ENCODE measurements at regions of chr5 and their contacts with region 1.

Region 1: GRCh38 chr5:171484460-171484899 is 65.0 kb downstream of the FGF18 start:
- H3K4me3 ChIP-seq: no peak overlapping the region
- H3K27ac ChIP-seq: no peak overlapping the region
- H3K4me1 ChIP-seq: peaks cover 7% of the 10 kb centered on the region; the same call in 1 of the 2 replicates
- CTCF ChIP-seq: peak; percentile 58; the same call in 1 of the 2 replicates

Region 2: DNA sequence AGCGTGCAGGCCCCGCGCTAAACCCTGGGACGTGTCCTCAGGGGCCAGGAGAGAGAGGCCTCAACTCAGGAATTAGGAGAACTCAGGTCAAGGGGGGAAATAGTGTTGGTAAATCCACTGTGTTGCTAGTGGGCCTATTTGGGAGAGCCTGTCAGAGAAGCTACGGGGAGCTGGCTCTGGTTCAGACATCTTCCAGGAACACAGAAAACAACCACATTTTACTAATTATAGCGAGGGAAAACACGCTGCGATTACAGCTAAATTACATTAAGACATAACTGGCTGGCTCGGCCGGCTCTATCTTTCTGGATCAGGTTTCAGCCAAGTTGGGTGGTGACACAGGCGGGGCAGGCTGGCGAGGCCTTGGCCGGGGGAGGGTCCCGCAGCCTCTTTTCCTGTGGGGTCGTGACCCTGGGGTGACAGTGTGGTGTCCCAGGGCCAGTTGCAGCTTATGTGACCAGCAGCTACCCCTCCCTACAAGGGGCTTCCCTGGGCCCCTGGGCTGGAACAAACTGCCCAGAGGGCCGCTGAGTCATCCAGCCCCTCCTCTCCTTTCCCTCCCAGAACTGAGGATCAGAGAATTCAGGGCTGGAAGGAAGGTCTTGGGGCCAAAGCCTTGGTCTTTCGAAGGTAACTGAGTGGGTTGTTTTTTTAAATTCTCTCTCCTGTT is 10.1 kb after region 1 on chr5:
- CTCF ChIA-PET with region 1: interaction called, 24 read pairs
- POLR2A ChIA-PET with region 1: no interaction called
- H3K4me3 ChIP-seq: no peak overlapping the region
- H3K27ac ChIP-seq: peak overlapping the region; percentile 71
- H3K4me1 ChIP-seq: peaks cover 13% of the 10 kb centered on the region
- CTCF ChIP-seq: no peak

Measured in HEK293 (cell line).